ENCODE measurements at regions of chr2 and their contacts with region 1.

Region 1: DNA sequence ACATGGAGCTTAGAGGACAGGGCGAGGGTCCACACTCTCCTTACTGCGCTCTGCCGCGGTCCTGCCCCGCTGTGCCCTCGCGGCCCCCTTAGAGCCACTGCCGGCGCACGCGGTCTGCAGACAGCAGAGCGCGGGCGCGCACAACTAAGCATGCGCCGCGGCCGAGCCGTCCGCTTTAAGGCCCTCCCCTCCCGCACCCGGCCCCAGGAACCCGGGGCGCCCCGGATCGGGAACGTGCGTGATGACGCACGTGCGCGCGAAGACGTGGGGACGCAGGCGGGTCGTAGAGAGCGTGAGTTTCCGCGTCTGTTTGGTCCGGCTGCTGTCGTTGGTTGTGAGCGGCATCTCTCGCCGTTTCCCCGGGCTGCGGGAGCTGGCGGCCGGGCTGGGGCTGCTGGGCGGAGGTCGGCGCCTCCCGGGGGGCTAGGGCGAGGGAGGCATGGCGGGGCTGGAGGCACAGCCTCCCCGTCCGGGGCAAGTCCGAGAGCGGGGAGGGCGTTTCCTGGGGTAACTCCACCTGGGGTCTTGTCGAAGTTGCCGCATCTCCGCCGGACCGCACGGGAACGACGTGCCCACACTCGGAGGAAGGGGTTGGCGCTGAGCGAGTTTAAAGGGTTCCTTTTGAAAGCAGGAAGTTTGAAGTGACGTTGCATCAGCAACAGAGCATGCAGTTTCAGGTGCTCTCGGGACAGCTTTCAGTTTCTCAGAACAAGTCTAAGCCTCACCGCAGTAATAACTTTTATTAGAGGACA is at the start of gene RHBDD1:
- DNase-seq: peak; percentile 91 to 98 (median 95)
- ATAC-seq: peak; percentile 99
- H3K4me3 ChIP-seq: peak within 1 kb of the TSS; percentile 68 to 72
- H3K27ac ChIP-seq: peak within 1 kb of the TSS; percentile 98 to 99
- H3K4me1 ChIP-seq: peaks cover 4 to 33% of the 10 kb centered on the region in 2 donors
- H3K27me3 ChIP-seq: no peaks in the 10 kb centered on the region
- CTCF ChIP-seq: no peak
- polyA plus RNA-seq, gene RHBDD1: 22.8 to 26.6 (median 24.7) TPM

Region 2: GRCh38 chr2:226916669-226917068 is 80.7 kb after region 1 on chr2:
- intact Hi-C with region 1: no loop called
- DNase-seq: no peak
- ATAC-seq: no peak
- H3K4me3 ChIP-seq: no peak overlapping the region
- H3K27ac ChIP-seq: no peak overlapping the region
- H3K4me1 ChIP-seq: no peaks in the 10 kb centered on the region
- H3K27me3 ChIP-seq: no peaks in the 10 kb centered on the region
- CTCF ChIP-seq: no peak

Region 3: GRCh38 chr2:226977775-226978190 is 141.8 kb after region 1 on chr2:
- intact Hi-C with region 1: loop called in 1 of 2 experiments (anchors 10 kb)
- DNase-seq: no peak
- ATAC-seq: no peak
- H3K4me3 ChIP-seq: no peak overlapping the region
- H3K27ac ChIP-seq: no peak overlapping the region
- H3K4me1 ChIP-seq: no peaks in the 10 kb centered on the region
- H3K27me3 ChIP-seq: no peaks in the 10 kb centered on the region
- CTCF ChIP-seq: no peak

Region 4: GRCh38 chr2:227038550-227039189 is 202.7 kb after region 1 on chr2:
- intact Hi-C with region 1: no loop called
- DNase-seq: peak in 2 of 4 donors; percentile 53 to 72
- ATAC-seq: no peak
- H3K4me3 ChIP-seq: no peak overlapping the region
- H3K27ac ChIP-seq: no peak overlapping the region
- H3K4me1 ChIP-seq: no peaks in the 10 kb centered on the region
- H3K27me3 ChIP-seq: peaks cover 0 to 7% of the 10 kb centered on the region in 2 donors
- CTCF ChIP-seq: no peak

Measured in left lung (tissue), 14 donors.